IMR-90 (cell line): ENCODE measurements at regions of chr1 and their contacts with region 1.

Region 1: GRCh38 chr1:157490467-157491165 is 61.7 kb downstream of the FCRL5 start:
- DNase-seq: peak; percentile 26
- ATAC-seq: peak; percentile 66
- H3K4me3 ChIP-seq: no peak overlapping the region
- H3K27ac ChIP-seq: no peak overlapping the region
- H3K4me1 ChIP-seq: no peaks in the 10 kb centered on the region
- H3K27me3 ChIP-seq: no peaks in the 10 kb centered on the region
- CTCF ChIP-seq: peak; percentile 62
- POLR2A ChIP-seq: no peak
- RAD21 ChIP-seq: peak; percentile 41

Region 2: DNA sequence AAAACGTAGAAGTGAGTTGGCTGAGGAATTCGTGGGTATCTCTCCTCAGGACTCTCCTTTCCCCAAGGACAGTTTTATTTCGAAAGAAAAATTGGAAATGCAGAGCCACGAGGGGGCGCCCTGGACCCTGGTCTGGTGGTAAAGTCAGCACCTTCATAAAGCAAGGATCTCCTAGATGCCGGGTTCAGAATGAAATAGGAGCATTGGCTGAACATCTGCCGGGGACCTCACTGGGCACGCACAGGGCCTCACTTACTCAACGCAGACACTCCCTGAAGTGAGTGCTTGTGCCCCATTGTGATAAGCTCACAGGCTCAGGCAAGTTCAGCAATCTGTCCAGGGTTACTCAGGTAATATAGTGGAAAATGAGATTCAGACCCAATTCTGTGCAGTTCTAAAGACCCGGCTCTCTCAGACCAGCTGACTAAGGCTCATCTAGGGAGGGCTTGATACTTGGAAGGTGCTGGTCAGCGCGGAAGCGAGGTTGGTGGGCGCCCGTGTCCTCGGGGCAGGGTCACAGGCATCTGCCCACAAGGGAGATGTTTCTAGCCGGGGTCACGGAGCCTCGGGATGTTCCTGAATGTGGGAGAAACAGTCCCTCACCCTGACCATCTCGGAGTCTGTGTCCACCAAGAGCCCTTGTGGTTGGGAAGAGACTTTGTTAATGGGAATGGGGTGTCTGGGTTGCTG is 296.8 kb before region 1 on chr1:
- CTCF ChIA-PET with region 1: no interaction called
- POLR2A ChIA-PET with region 1: no interaction called
- dilution Hi-C with region 1: no loop called
- in situ Hi-C with region 1: loop called (anchors 10 kb)
- intact Hi-C with region 1: loop called (anchors 1 kb)
- DNase-seq: peak; percentile 42
- ATAC-seq: peak; percentile 82
- H3K4me3 ChIP-seq: no peak overlapping the region
- H3K27ac ChIP-seq: no peak overlapping the region
- H3K4me1 ChIP-seq: no peaks in the 10 kb centered on the region
- H3K27me3 ChIP-seq: peaks cover 50% of the 10 kb centered on the region
- CTCF ChIP-seq: peak; percentile 72
- POLR2A ChIP-seq: no peak
- RAD21 ChIP-seq: peak; percentile 50

Region 3: GRCh38 chr1:157369808-157370521 is 120.7 kb before region 1 on chr1:
- CTCF ChIA-PET with region 1: no interaction called
- POLR2A ChIA-PET with region 1: no interaction called
- dilution Hi-C with region 1: no loop called
- in situ Hi-C with region 1: loop called (anchors 5 kb)
- intact Hi-C with region 1: loop called (anchors 1 kb)
- DNase-seq: peak; percentile 43
- ATAC-seq: peak; percentile 98
- H3K4me3 ChIP-seq: no peak overlapping the region
- H3K27ac ChIP-seq: no peak overlapping the region
- H3K4me1 ChIP-seq: no peaks in the 10 kb centered on the region
- H3K27me3 ChIP-seq: peaks cover 1% of the 10 kb centered on the region; the same call in 1 of the 2 replicates
- CTCF ChIP-seq: peak; percentile 67
- POLR2A ChIP-seq: no peak
- RAD21 ChIP-seq: peak; percentile 66

Region 4: DNA sequence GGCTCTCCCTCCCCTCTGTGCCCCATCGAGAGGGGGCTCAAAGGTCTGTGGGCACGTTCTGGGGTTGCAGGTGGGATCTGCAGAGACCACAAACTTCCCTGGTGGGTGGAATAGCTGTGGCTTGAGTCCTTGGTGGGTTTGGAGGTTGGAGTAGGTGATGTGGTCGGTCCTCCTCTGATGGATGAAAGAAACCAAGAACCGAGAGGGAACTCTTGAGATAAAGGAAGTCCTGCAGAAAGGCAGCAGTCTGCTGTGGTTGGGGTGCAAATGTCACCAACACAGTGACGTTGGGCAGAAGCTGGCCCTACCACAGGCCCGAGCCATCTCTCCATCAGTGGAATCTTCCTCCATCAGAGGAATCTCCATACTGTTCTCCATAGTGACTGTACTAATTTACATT is 110.1 kb before region 1 on chr1:
- CTCF ChIA-PET with region 1: no interaction called
- POLR2A ChIA-PET with region 1: no interaction called
- dilution Hi-C with region 1: no loop called
- in situ Hi-C with region 1: no loop called
- intact Hi-C with region 1: loop called (anchors 1 kb)
- DNase-seq: no peak
- ATAC-seq: no peak
- H3K4me3 ChIP-seq: no peak overlapping the region
- H3K27ac ChIP-seq: no peak overlapping the region
- H3K4me1 ChIP-seq: no peaks in the 10 kb centered on the region
- H3K27me3 ChIP-seq: peaks cover 5% of the 10 kb centered on the region
- CTCF ChIP-seq: no peak
- POLR2A ChIP-seq: no peak
- RAD21 ChIP-seq: no peak

Region 5: GRCh38 chr1:157551694-157552637 is 61.4 kb after region 1 on chr1 and contains the start of gene FCRL5:
- CTCF ChIA-PET with region 1: no interaction called
- POLR2A ChIA-PET with region 1: no interaction called
- dilution Hi-C with region 1: no loop called
- in situ Hi-C with region 1: no loop called
- intact Hi-C with region 1: no loop called
- DNase-seq: no peak
- ATAC-seq: no peak
- H3K4me3 ChIP-seq: no peak within 1 kb of the TSS
- H3K27ac ChIP-seq: no peak within 1 kb of the TSS
- H3K4me1 ChIP-seq: no peaks in the 10 kb centered on the region
- H3K27me3 ChIP-seq: no peaks in the 10 kb centered on the region
- CTCF ChIP-seq: no peak
- POLR2A ChIP-seq: no peak
- RAD21 ChIP-seq: no peak
- total RNA-seq, gene FCRL5: not detected in 2 replicates